Activated naive CD4-positive, alpha-beta T cell treated with anti-CD3 and anti-CD28 coated beads for 36 hours (primary cell): ENCODE measurements at regions of chr14 and their contacts with region 1.

Region 1: GRCh38 chr14:96056509-96057422 is 17.6 kb downstream of the C14orf132 start:
- DNase-seq: peak; percentile 24
- H3K4me3 Mint-ChIP-seq: no peak overlapping the region
- H3K27ac Mint-ChIP-seq: no peak overlapping the region
- H3K4me1 Mint-ChIP-seq: no peaks in the 10 kb centered on the region
- H3K27me3 Mint-ChIP-seq: no peaks in the 10 kb centered on the region

Region 2: GRCh38 chr14:96275177-96276112 is 218.7 kb after region 1 on chr14:
- CTCF ChIA-PET with region 1: no interaction called
- intact Hi-C with region 1: loop called (anchors 1 kb)
- DNase-seq: peak; percentile 83
- H3K4me3 Mint-ChIP-seq: no peak overlapping the region
- H3K27ac Mint-ChIP-seq: no peak overlapping the region
- H3K4me1 Mint-ChIP-seq: peaks cover 2% of the 10 kb centered on the region
- H3K27me3 Mint-ChIP-seq: no peaks in the 10 kb centered on the region